Lower leg skin (tissue), 4 donors: ENCODE measurements at regions of chr7 and their contacts with region 1.

Region 1: GRCh38 chr7:121385800-121386179 is 10.3 kb downstream of the FAM3C start:
- DNase-seq: no peak
- H3K4me3 ChIP-seq: no peak overlapping the region
- CTCF ChIP-seq: no peak
- POLR2A ChIP-seq: no peak

Region 2: GRCh38 chr7:120996333-120996987 is 389.3 kb before region 1 on chr7:
- intact Hi-C with region 1: no loop called
- DNase-seq: peak; percentile 85 to 87
- H3K4me3 ChIP-seq: no peak overlapping the region
- CTCF ChIP-seq: no peak
- POLR2A ChIP-seq: no peak

Region 3: DNA sequence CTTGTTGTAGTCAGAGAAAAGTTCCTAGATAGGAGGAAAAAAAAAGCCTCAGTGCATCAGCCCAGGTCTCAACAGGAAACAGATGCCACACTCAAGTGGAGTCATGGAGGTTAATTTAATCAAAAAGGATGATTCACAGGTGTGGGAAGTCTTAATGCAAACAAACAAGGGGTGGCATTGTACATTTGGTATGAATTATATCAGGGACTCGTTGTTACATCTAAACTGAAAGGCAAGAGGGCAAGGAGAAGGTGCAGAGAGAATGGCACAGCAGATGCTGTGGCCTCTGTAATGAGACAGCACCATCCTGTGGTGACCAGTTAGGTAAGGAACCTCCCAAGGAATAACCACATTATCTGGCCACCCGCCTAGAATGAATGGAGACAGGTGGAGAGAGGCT is 620.9 kb after region 1 on chr7:
- intact Hi-C with region 1: loop called (anchors 10 kb)
- DNase-seq: no peak
- H3K4me3 ChIP-seq: no peak overlapping the region
- CTCF ChIP-seq: no peak
- POLR2A ChIP-seq: no peak